ENCODE measurements at regions of chr1 and their contacts with region 1.

Region 1: GRCh38 chr1:32179443-32180185 is at the start of gene TXLNA:
- DNase-seq: peak; percentile 92 to 99 (median 94)

Region 2: DNA sequence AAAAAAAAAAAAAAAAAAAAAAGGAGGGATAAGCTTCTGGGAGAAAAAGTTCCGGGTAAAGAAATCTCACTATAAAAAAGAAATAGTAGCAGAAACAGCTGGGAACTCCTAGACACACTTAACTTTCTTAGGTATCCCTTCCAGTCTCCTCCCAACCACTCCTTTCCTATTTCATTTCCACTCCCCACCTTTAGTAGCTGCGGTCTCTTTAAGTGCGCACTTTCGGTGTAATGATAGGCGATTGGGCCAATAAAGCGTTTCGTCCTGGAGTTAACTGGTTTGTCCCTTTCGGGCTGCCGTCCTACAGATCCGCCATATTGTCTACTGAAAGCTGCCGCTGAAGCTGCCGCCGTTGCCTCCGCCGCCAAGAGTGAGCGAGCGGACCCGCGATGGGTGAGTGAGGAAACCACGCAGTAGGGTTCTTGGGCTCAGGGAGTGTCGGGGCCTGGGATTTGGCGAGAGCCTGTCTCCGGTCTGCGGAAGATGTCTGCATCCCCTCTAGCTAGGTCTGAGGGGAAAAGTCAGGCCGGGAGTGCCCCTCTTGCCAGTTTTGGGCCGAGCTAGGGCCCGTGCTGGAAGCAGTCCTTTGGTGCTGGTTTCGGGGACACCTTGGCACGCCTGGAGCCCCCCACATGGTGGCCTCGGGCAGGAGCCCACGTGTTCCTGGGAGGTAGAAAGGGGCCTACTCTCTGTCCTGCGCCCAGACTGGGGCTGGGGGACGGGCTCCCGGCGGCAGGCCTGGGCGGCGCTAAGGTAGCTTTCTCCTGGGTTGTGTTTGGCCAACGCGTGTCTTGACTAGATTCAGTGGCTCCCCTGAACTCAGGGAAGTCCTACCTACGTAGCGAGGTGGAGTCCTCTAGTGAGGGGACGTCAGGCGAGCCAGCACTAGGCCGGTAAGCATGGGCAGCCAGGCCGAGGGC is 71.6 kb before region 1 on chr1 and contains the start of gene KPNA6:
- intact Hi-C with region 1: loop called (anchors 10 kb)
- DNase-seq: peak; percentile 84 to 97 (median 90)

Region 3: DNA sequence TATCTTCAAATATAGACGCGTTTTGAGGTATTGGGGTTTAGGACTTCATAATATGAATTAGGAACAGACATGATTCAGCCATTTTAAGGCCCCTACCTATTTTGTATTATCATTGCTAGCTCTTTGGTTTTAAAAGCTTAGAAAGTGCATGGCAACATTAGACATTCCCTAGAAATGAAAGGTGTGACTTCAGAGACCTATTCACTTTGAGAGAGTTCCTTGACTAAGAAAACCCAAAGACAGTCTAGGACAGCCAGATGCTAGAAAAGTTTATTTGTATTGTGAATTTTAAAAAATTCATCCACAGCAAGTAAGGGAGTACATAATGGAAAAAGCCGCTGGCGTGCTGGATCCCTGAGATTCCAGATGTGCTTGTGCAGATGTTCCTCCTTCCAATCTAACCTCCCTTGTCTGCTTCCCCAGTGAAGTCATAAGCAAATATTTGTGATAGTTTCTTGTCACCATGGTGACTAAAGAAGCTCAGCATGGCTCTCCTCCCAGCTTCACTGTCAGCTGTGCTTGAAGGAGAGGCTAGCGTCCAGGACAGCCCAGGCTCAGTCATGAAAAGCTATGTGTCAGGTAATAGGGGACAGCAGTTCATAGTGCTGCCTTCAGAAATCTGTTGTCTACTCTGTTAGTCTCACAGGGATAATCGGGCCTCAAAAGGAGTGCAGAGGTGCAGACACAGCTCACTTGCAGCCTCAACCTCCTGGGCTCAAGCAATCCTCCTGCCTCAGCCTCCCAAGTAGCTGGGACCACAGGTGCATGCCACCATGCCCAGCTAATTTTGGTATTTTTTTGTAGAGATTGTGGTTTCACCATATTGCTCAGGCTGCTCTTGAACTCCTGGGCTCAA is 36.9 kb before region 1 on chr1:
- intact Hi-C with region 1: no loop called
- DNase-seq: peak in 1 of 10 donors; percentile 13

Measured in posterior cingulate gyrus (tissue), 11 donors.